ENCODE measurements at regions of chr5 and their contacts with region 1.

Region 1: GRCh38 chr5:154405078-154405792 is 40.6 kb upstream of the SAP30L start:
- DNase-seq: peak; percentile 83
- H3K4me3 ChIP-seq: peak overlapping the region in 3 of 4 donors; percentile 10 to 38 (median 11)
- H3K27ac ChIP-seq: no peak overlapping the region
- H3K4me1 ChIP-seq: peaks cover 4 to 10% (median 9%) of the 10 kb centered on the region in 4 donors
- H3K27me3 ChIP-seq: no peaks in the 10 kb centered on the region
- CTCF ChIP-seq: peak; percentile 78 to 88 (median 83)
- EP300 ChIP-seq: no peak
- POLR2A ChIP-seq: no peak

Region 2: DNA sequence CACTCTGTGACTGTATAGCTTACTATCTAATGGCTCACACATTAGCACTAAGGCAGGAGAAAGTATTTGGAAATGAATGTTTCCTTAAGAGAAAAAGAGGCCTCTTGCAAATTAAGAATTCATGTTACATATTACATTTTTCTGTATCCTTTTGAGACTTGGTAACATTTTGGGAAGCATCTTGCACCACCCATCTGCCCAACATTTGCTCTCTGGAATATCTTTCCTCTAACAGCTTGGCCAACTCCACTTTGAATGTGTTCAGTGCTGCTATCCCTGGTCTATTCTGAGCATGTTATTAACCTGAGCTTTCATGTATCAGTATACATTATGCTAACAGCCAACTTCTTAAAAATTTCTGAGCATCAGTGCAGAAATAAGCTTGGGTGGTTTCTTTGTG is 339.3 kb before region 1 on chr5:
- in situ Hi-C with region 1: loop called (anchors 5 to 10 kb)
- intact Hi-C with region 1: loop called (anchors 5 kb)
- DNase-seq: no peak
- H3K4me3 ChIP-seq: no peak overlapping the region
- H3K27ac ChIP-seq: no peak overlapping the region
- H3K4me1 ChIP-seq: peaks cover 0 to 2% (median 0%) of the 10 kb centered on the region in 4 donors
- H3K27me3 ChIP-seq: no peaks in the 10 kb centered on the region
- CTCF ChIP-seq: no peak
- EP300 ChIP-seq: no peak
- POLR2A ChIP-seq: no peak

Region 3: DNA sequence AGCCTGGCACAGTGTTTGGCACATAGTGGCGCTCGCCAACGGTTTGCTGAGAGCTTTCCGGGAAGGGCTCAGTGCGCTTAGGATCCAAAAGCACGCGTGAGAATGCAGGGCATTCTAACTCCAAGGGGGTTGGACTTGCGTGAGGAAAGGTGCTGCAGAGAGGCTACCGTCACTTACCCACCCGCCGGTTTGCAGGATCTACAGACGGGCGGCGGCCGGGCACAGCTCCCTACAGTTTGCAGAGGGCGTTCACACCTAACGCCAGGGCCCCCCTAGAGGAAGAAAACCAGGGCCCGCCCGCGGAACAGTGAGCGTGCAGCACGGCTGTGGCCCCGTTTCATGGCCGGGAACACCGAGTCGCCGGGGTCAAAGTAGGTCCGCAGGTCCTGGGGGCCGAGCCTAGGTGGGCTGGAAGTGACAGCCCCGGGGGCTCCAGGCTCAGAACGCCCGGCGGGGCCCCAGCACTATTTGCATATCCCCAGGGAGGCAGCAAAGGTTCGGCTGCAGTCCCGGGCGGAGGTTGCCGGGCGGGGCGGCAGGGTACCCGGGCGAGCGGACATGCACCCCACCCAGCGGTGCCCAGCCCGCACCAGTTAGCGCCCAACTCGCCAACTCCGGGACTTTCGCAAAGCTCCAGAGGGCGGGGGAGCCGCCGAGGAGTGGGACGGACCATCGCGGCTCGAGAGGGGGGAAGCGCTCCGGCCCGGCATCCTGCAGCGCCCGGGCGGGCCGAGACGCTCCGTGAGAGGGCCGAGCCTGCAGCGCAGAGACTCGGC is 215.2 kb before region 1 on chr5:
- in situ Hi-C with region 1: loop called in 3 of 4 experiments (anchors 10 to 25 kb)
- intact Hi-C with region 1: no loop called
- DNase-seq: peak; percentile 90
- H3K4me3 ChIP-seq: peak overlapping the region; percentile 59 to 82 (median 72)
- H3K27ac ChIP-seq: peak overlapping the region; percentile 85 to 96 (median 90)
- H3K4me1 ChIP-seq: peaks cover 6 to 39% (median 22%) of the 10 kb centered on the region in 4 donors
- H3K27me3 ChIP-seq: no peaks in the 10 kb centered on the region
- CTCF ChIP-seq: peak; percentile 33 to 79 (median 49)
- EP300 ChIP-seq: no peak
- POLR2A ChIP-seq: peak; percentile 50

Measured in transverse colon (tissue), 4 donors.